IMR-90 (cell line): ENCODE measurements at regions of chr6 and their contacts with region 1.

Region 1: GRCh38 chr6:35139908-35140655 is 1.1 kb downstream of the TCP11 start:
- DNase-seq: peak; percentile 82
- ATAC-seq: peak; percentile 72
- H3K4me3 ChIP-seq: no peak overlapping the region
- H3K27ac ChIP-seq: no peak overlapping the region
- H3K4me1 ChIP-seq: peaks cover 2% of the 10 kb centered on the region; the same call in 1 of the 2 replicates
- H3K27me3 ChIP-seq: no peaks in the 10 kb centered on the region
- CTCF ChIP-seq: peak; percentile 90
- POLR2A ChIP-seq: no peak; the same call in 1 of the 2 replicates
- RAD21 ChIP-seq: peak; percentile 98

Region 2: DNA sequence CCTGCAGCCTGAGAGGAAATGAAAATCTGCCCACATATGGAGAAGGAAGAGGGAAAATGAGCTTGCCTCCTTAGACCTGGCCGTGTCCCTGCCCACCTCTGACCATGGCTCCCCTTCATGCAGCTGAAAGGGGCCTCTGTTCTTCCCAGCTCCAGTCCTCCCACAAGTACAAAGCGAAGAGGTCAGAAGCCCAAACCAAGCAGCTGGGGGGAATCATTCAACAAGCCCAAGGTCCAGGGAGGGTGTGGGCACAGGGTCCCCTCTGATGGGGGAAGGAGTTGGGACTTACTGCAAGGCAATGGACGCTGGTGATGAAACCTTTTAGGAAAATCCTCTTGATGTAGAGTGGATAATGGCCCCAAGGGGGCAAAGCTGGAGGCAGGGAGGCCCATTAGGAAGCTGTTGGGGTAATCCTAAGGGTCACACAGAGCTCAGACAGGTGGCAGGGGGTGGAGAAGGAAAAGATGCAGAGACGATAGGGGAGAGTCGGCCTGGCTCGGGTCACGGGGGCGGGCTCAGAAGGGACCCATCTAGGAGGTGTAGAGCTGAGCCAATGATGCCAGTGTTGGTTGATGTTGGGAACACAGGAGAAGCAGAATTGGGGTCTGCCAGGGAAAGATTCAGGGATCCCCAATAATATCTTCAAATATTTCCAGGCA is 978.1 kb before region 1 on chr6:
- CTCF ChIA-PET with region 1: interaction called, 4 read pairs
- POLR2A ChIA-PET with region 1: no interaction called
- dilution Hi-C with region 1: no loop called
- in situ Hi-C with region 1: loop called (anchors 25 kb)
- intact Hi-C with region 1: loop called (anchors 2 kb)
- DNase-seq: no peak
- ATAC-seq: no peak
- H3K4me3 ChIP-seq: no peak overlapping the region
- H3K27ac ChIP-seq: no peak overlapping the region
- H3K4me1 ChIP-seq: no peaks in the 10 kb centered on the region
- H3K27me3 ChIP-seq: peaks cover 7% of the 10 kb centered on the region
- CTCF ChIP-seq: no peak
- POLR2A ChIP-seq: no peak
- RAD21 ChIP-seq: no peak

Region 3: GRCh38 chr6:34595332-34596184 is 544.5 kb before region 1 on chr6:
- CTCF ChIA-PET with region 1: no interaction called
- POLR2A ChIA-PET with region 1: no interaction called
- dilution Hi-C with region 1: no loop called
- in situ Hi-C with region 1: no loop called
- intact Hi-C with region 1: no loop called
- DNase-seq: peak; percentile 52
- ATAC-seq: peak; percentile 38
- H3K4me3 ChIP-seq: no peak overlapping the region
- H3K27ac ChIP-seq: no peak overlapping the region
- H3K4me1 ChIP-seq: peaks cover 7% of the 10 kb centered on the region
- H3K27me3 ChIP-seq: no peaks in the 10 kb centered on the region
- CTCF ChIP-seq: no peak
- POLR2A ChIP-seq: no peak
- RAD21 ChIP-seq: no peak

Region 4: DNA sequence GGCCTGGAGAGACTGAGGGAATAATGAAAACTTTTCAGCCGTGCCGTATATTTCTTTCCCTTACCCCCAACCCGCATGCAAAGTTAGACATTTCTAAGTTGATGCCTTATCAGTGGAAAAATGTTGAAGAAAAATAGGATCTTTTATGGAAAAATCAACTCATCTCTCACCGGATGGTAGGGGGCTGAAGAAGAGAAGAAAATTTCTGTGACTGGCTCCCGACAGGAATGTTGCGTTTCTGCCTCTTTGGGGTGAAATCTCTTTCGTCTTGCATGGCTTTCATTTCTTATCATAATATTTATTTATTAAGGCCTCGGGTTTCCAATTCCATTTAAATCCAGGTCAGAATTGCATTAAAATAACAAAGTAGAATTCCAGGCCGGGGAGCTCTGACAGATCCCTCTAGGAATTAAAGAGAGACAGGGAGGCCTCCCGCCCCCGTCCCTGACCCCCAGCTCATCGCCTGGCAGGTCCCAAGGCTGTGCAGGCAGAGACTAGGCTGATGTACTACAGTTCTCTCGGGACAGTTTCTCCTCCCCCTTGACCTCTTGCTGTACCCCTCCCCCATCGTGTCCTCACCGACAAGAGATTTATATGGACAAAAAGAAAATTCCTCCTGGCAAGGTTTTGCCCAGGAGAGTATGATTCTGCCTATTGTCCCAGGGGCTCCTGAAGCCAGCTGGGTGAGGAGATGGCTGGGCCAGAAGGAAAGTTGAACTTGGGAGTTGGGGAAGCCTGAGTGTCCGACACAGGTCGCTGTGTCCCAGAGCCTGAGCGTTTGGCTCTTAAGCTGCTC is 75.0 kb after region 1 on chr6:
- CTCF ChIA-PET with region 1: no interaction called
- POLR2A ChIA-PET with region 1: no interaction called
- dilution Hi-C with region 1: no loop called
- in situ Hi-C with region 1: no loop called
- intact Hi-C with region 1: no loop called
- DNase-seq: peak; percentile 49
- ATAC-seq: peak; percentile 37
- H3K4me3 ChIP-seq: peak overlapping the region; percentile 62
- H3K27ac ChIP-seq: peak overlapping the region; percentile 18; the same call in 1 of the 2 replicates
- H3K4me1 ChIP-seq: peaks cover 34% of the 10 kb centered on the region
- H3K27me3 ChIP-seq: peaks cover 23% of the 10 kb centered on the region
- CTCF ChIP-seq: no peak
- POLR2A ChIP-seq: no peak
- RAD21 ChIP-seq: no peak